IMR-90 (cell line): ENCODE measurements at regions of chr2 and their contacts with region 1.

Region 1: DNA sequence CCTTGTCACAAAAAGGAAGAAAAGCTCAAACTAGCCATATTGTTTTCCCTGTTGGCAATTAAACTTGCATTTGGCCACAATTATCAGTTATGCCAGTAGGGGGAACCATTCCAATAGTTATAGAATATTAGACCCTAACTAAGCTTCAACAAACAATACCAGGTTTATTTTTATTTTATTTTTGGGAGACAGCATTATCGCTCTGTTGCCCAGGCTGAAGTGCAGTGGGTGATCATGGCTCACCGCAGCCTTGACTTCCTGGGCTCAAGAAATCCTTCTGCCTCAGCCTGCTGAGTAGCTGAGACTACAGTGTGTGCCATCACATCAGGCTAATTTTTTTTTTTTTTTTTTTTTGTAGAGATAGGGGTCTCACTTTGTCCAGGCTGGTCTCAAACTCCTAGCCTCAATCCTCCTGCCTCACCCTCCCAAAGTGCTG is 102.1 kb downstream of the ATAD2B start:
- DNase-seq: peak; percentile 62
- ATAC-seq: peak; percentile 76
- H3K4me3 ChIP-seq: no peak overlapping the region
- H3K27ac ChIP-seq: no peak overlapping the region
- H3K4me1 ChIP-seq: no peaks in the 10 kb centered on the region
- H3K27me3 ChIP-seq: no peaks in the 10 kb centered on the region
- CTCF ChIP-seq: peak; percentile 72
- POLR2A ChIP-seq: no peak
- RAD21 ChIP-seq: peak; percentile 69

Region 2: GRCh38 chr2:24058564-24059271 is 233.9 kb after region 1 on chr2:
- CTCF ChIA-PET with region 1: interaction called, 6 read pairs
- POLR2A ChIA-PET with region 1: no interaction called
- dilution Hi-C with region 1: no loop called
- in situ Hi-C with region 1: no loop called
- intact Hi-C with region 1: loop called (anchors 5 kb)
- DNase-seq: no peak
- ATAC-seq: no peak
- H3K4me3 ChIP-seq: no peak overlapping the region
- H3K27ac ChIP-seq: no peak overlapping the region
- H3K4me1 ChIP-seq: no peaks in the 10 kb centered on the region
- H3K27me3 ChIP-seq: no peaks in the 10 kb centered on the region
- CTCF ChIP-seq: no peak
- POLR2A ChIP-seq: no peak
- RAD21 ChIP-seq: no peak

Region 3: DNA sequence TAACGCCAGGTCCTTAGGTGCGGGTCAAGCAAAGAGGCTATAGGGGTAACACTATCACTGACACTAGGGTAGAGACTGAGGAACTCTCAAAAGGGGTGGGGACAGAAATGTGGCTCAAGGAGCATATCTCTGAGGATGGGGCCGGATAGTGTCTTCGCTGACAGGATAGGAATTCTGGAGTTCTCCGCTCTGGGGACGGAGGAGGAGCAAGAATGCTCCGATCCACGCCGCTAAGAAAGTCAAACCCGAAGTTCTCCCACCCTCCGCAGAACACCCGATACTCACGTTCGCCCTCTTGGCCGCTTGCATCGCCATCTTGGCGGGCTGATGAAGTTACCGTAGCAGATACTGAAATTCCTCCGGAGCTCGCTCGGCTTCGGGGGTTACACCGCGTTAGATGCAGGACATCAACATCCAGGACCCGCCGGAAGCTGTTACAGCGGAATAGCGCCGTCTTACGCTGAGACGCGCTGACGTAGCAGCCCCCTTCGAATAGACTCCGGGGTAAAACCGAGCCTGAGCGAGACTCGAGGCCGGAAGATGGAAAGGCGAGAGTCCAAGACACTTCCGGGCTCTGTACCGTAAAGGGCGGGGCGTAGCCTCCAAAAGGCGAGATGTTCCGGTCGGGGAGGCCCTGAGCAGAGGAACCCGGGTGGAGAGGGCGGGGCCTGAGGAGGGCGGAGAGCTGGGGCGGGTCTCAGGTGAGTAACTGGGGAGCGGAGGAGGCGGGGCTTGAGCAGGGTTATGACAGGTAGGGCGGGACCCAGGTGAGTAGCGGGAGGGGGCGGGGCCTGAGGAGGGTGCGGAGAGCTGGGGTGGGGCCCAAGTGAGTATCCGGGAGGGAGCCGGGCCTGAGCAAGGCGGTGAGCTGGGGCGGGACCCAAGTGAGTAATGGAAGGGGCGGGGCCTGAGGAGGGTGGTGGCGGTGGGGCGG is 251.4 kb after region 1 on chr2 and contains the start of gene SF3B6:
- CTCF ChIA-PET with region 1: no interaction called
- POLR2A ChIA-PET with region 1: no interaction called
- dilution Hi-C with region 1: no loop called
- in situ Hi-C with region 1: loop called (anchors 10 kb)
- intact Hi-C with region 1: no loop called
- DNase-seq: peak; percentile 99
- ATAC-seq: peak; percentile 93
- H3K4me3 ChIP-seq: peak within 1 kb of the TSS; percentile 73
- H3K27ac ChIP-seq: peak within 1 kb of the TSS; percentile 68
- H3K4me1 ChIP-seq: peaks cover 3% of the 10 kb centered on the region; the same call in 1 of the 2 replicates
- H3K27me3 ChIP-seq: no peaks in the 10 kb centered on the region
- CTCF ChIP-seq: no peak
- POLR2A ChIP-seq: peak; percentile 59; the same call in 1 of the 2 replicates
- RAD21 ChIP-seq: no peak
- total RNA-seq, gene SF3B6: 143 and 224 TPM in 2 replicates

Region 4: GRCh38 chr2:24084386-24085361 is 259.9 kb after region 1 on chr2 and contains the start of gene TP53I3:
- CTCF ChIA-PET with region 1: interaction called, 10 read pairs
- POLR2A ChIA-PET with region 1: no interaction called
- dilution Hi-C with region 1: no loop called
- in situ Hi-C with region 1: loop called (anchors 10 kb)
- intact Hi-C with region 1: loop called (anchors 2 kb)
- DNase-seq: peak; percentile 84
- ATAC-seq: peak; percentile 93
- H3K4me3 ChIP-seq: peak within 1 kb of the TSS; percentile 70
- H3K27ac ChIP-seq: peak within 1 kb of the TSS; percentile 89
- H3K4me1 ChIP-seq: peaks cover 4% of the 10 kb centered on the region; the same call in 1 of the 2 replicates
- H3K27me3 ChIP-seq: no peaks in the 10 kb centered on the region
- CTCF ChIP-seq: peak; percentile 91
- POLR2A ChIP-seq: peak; percentile 71
- RAD21 ChIP-seq: peak; percentile 79
- total RNA-seq, gene TP53I3: 25.5 and 26.9 TPM in 2 replicates

Region 5: DNA sequence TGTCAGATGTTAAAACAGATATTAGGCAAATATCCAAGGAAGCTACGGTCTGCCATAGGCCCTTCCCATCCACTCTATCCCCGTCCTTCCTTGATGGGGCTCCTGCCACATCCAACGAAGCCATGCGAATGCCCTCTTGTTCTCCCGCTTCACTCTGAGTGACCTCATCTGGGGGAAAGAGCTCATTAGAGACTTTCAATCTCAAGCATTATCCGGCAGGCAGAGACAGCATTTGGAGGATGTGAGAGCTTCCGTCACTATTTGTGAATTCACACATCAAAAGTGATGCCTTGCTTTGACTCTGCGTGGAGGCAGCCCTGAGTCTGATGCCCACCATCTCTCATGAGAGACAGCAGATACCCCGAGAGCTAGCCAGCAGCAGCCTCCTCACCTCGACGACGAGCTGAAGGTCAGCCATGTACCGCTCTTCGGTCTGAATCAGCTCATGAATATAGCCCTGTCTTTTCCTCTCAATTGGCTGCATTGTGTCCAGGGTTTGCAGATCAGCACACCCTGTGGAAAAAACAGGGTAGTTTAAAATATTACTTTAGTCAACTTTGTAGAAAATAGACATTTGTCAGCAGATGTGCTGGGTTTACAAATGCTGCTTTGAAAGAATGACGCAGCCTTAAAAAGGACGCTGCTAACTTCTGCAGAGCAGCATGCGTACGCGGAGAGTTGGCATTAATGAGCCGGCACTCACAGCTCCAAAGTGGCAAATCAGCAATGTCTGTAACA is 395.9 kb after region 1 on chr2:
- CTCF ChIA-PET with region 1: no interaction called
- POLR2A ChIA-PET with region 1: no interaction called
- dilution Hi-C with region 1: no loop called
- in situ Hi-C with region 1: no loop called
- intact Hi-C with region 1: no loop called
- DNase-seq: no peak
- ATAC-seq: no peak
- H3K4me3 ChIP-seq: no peak overlapping the region
- H3K27ac ChIP-seq: no peak overlapping the region
- H3K4me1 ChIP-seq: peaks cover 2% of the 10 kb centered on the region; the same call in 1 of the 2 replicates
- H3K27me3 ChIP-seq: no peaks in the 10 kb centered on the region
- CTCF ChIP-seq: no peak
- POLR2A ChIP-seq: no peak
- RAD21 ChIP-seq: no peak